ENCODE measurements at regions of chr7 and their contacts with region 1.

Region 1: GRCh38 chr7:92833024-92833765 is 3.2 kb downstream of the CDK6 start:
- DNase-seq: peak; percentile 98
- H3K4me3 ChIP-seq: peak overlapping the region; percentile 67 to 95 (median 82)
- H3K27ac ChIP-seq: peak overlapping the region; percentile 78 to 91 (median 86)
- H3K4me1 ChIP-seq: peaks cover 9 to 67% (median 46%) of the 10 kb centered on the region in 6 donors
- H3K27me3 ChIP-seq: peaks cover 0 to 6% (median 0%) of the 10 kb centered on the region in 7 donors
- CTCF ChIP-seq: peak; percentile 66 to 95 (median 87)
- POLR2A ChIP-seq: no peak

Region 2: DNA sequence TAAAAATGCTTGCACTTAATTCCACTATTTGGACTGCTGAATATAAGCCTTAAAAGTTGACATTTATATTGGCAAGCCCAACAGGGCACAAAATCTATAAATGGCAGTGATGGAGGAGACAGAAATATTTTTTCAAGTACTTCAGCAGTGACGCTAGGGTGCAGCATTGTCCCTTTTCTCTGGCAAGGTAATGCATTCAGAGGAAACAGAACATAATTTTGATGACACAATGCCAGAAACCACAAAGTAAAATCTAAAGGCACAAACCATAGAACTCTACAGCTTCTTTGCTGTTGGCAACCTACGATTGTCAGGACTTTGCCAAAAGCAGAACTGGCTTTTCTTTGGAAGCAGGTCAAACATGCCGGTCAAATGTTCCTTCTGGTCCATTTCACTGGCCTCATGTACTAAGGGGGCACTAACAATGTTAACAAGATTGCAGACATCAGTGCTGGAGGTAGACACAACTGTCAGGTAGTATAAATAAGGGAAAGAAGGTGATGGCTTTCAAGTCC is 212.1 kb before region 1 on chr7:
- intact Hi-C with region 1: loop called (anchors 10 kb)
- DNase-seq: no peak
- H3K4me3 ChIP-seq: no peak overlapping the region
- H3K27ac ChIP-seq: peak overlapping the region in 6 of 8 donors; percentile 7 to 62 (median 40)
- H3K4me1 ChIP-seq: peaks cover 4 to 28% (median 13%) of the 10 kb centered on the region in 6 donors
- H3K27me3 ChIP-seq: no peaks in the 10 kb centered on the region
- CTCF ChIP-seq: peak; percentile 41 to 82 (median 65)
- POLR2A ChIP-seq: no peak

Region 3: DNA sequence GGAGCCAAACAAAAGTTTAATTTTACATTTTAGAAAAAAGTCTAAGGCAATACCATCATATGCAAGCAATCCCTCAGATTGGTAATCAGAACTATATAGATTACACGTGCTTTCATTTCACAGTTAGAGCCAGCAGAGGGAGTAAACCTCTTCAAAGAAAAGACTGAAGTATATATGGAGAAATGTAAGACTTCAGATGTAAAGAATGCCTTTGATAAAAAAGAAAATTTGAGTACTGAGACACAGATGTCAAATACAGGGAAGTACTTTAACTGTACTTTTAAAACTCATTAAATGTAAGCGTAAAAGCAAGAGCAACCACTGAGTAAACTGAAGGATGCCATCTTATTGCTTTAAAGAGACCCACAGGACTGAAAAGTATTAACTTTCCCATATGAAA is 141.6 kb before region 1 on chr7:
- intact Hi-C with region 1: loop called (anchors 10 kb)
- DNase-seq: no peak
- H3K4me3 ChIP-seq: no peak overlapping the region
- H3K27ac ChIP-seq: no peak overlapping the region
- H3K4me1 ChIP-seq: peaks cover 0 to 40% (median 10%) of the 10 kb centered on the region in 6 donors
- H3K27me3 ChIP-seq: no peaks in the 10 kb centered on the region
- CTCF ChIP-seq: peak in 9 of 11 experiments; percentile 24 to 68 (median 52)
- POLR2A ChIP-seq: no peak

Region 4: DNA sequence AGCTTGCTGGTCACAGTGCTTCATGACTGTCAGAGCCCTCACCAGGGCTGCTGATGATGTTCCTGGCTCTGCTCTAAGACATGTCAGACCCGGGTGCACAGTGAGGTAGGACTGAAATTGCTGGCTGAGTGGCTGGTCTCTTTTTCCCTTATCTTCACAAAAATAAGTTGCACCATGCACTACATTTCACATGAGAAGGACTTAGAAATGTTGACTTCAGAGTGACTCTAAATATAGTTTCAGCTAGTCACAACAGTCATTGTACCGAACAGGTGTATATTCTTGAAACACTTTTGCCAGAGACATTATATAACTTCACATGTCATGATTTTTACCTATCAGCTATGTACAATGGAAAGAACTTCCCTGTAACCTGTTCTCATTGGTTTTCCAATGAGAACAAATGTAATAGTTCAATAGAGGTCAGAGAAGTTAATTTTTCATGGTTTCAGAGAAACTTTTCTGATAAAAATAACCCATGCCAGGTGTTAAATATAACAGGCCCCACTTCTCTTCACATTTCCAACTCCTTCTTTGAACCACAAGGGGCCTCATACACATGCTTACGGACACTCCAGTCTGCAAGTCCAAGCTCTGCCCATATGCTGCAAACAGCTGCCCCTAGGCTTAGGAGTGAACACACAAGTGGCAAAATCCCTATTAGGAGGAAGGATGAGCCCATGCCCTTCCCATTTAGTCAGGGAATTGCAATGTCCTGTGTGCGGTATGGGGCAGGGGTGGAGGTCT is 112.4 kb before region 1 on chr7:
- intact Hi-C with region 1: loop called (anchors 5 kb)
- DNase-seq: no peak
- H3K4me3 ChIP-seq: no peak overlapping the region
- H3K27ac ChIP-seq: peak overlapping the region in 3 of 8 donors; percentile 18 to 79 (median 26)
- H3K4me1 ChIP-seq: peaks cover 15 to 59% (median 39%) of the 10 kb centered on the region in 6 donors
- H3K27me3 ChIP-seq: no peaks in the 10 kb centered on the region
- CTCF ChIP-seq: no peak
- POLR2A ChIP-seq: no peak

Region 5: DNA sequence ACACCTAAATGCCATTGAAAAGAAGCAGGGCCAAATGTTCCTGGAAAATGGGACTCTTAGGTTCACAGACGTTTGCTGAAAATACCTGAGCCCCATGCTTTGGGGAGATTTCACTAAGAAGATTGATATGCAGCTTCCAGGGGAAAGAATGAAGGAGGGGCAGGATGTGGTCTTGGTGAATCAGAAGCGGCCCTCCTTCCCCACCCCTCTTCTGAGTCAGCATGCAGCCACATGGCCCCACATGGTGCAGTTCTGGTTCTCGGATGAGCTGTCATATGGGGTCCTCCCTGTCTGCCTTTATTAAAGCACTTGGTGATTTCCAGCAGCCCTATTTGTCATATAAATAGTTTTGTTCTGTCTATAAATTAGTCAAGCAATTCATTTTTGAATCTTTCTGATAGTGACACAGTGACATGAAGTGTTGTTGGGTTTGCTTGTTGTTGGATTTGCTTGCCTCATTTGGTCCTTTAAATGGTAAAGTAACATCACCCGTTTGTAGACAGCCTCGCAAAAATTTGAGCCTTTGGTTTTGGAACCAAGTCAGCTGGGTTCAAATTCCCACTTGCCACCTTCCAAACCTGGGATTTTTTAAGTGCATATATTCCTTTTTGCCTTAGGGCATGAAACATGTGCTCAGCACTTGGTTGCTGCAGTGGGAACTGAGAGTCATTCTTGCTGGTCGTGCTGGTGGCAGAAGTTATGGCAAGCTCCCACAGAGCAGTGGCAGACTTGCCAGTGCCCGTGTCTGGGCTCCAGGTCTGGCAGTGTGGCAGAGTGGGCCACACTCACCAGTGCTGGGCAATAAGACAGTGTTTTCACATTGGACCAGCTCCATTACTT is 71.3 kb after region 1 on chr7:
- intact Hi-C with region 1: no loop called
- DNase-seq: peak; percentile 75
- H3K4me3 ChIP-seq: no peak overlapping the region
- H3K27ac ChIP-seq: no peak overlapping the region
- H3K4me1 ChIP-seq: peaks cover 0 to 4% (median 0%) of the 10 kb centered on the region in 6 donors
- H3K27me3 ChIP-seq: no peaks in the 10 kb centered on the region
- CTCF ChIP-seq: no peak
- POLR2A ChIP-seq: no peak

Measured in spleen (tissue), 13 donors.